Caco-2 (cell line): ENCODE measurements at regions of chr1 and their contacts with region 1.

Region 1: DNA sequence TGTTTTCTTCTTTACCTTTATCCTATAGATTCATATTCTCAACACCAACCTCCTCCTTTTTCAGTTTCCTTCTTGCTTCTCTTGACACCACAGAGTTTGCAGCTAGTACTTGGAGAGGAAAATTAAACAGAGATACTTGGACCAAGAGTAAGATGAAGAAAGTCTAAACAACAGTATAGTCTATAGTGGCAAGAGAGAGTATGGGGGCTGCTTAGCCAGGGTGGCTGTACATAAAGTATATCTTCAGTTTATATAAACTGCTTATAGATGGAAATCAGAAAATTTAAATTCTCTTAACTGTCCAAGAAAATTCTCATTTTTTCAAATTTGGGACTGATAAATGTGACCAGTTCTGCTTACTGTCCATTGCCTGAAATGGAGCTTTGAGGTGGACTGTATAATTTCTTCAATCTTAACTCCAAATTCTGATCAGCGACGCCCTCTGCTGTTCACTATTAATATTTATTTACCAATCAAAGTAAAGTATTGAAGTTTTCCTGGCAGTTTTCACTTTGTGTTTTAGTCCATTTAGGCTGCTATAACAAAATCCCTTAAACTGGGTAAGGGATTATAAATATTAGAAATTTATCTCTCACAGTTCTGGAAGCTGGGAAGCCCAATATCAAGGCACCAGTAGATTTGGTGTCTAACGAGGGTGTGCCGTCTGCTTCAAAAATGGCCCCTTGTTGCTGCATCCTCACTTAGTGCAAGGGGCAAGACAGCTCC is 14.8 kb upstream of the METTL18 start:
- DNase-seq: peak in 1 of 2 experiments; percentile 51
- H3K4me3 ChIP-seq: no peak overlapping the region
- H3K4me3 Mint-ChIP-seq: no peak overlapping the region
- H3K27ac Mint-ChIP-seq: no peak overlapping the region
- H3K4me1 ChIP-seq: no peaks in the 10 kb centered on the region
- H3K4me1 Mint-ChIP-seq: no peaks in the 10 kb centered on the region
- H3K27me3 ChIP-seq: no peaks in the 10 kb centered on the region
- H3K27me3 Mint-ChIP-seq: no peaks in the 10 kb centered on the region
- CTCF ChIP-seq: peak; percentile 34 to 46

Region 2: GRCh38 chr1:169601093-169601881 is 208.2 kb before region 1 on chr1:
- CTCF ChIA-PET with region 1: interaction called, 9 read pairs
- POLR2A ChIA-PET with region 1: no interaction called
- intact Hi-C with region 1: loop called (anchors 1 kb)
- DNase-seq: peak in 1 of 2 experiments; percentile 34
- H3K4me3 ChIP-seq: no peak overlapping the region
- H3K4me3 Mint-ChIP-seq: no peak overlapping the region
- H3K27ac Mint-ChIP-seq: no peak overlapping the region
- H3K4me1 ChIP-seq: no peaks in the 10 kb centered on the region
- H3K4me1 Mint-ChIP-seq: no peaks in the 10 kb centered on the region
- H3K27me3 ChIP-seq: no peaks in the 10 kb centered on the region; the same call in 1 of the 2 replicates
- H3K27me3 Mint-ChIP-seq: peaks cover 6% of the 10 kb centered on the region
- CTCF ChIP-seq: peak; percentile 35 to 41

Region 3: GRCh38 chr1:169648709-169649108 is 160.8 kb before region 1 on chr1:
- CTCF ChIA-PET with region 1: no interaction called
- POLR2A ChIA-PET with region 1: no interaction called
- intact Hi-C with region 1: no loop called
- DNase-seq: no peak
- H3K4me3 ChIP-seq: no peak overlapping the region
- H3K4me3 Mint-ChIP-seq: no peak overlapping the region
- H3K27ac Mint-ChIP-seq: no peak overlapping the region
- H3K4me1 ChIP-seq: no peaks in the 10 kb centered on the region
- H3K4me1 Mint-ChIP-seq: no peaks in the 10 kb centered on the region
- H3K27me3 ChIP-seq: no peaks in the 10 kb centered on the region
- H3K27me3 Mint-ChIP-seq: peaks cover 17% of the 10 kb centered on the region
- CTCF ChIP-seq: no peak

Region 4: GRCh38 chr1:169697755-169698154 is 111.8 kb before region 1 on chr1:
- CTCF ChIA-PET with region 1: no interaction called
- POLR2A ChIA-PET with region 1: no interaction called
- intact Hi-C with region 1: no loop called
- DNase-seq: no peak
- H3K4me3 ChIP-seq: no peak overlapping the region
- H3K4me3 Mint-ChIP-seq: no peak overlapping the region
- H3K27ac Mint-ChIP-seq: no peak overlapping the region
- H3K4me1 ChIP-seq: no peaks in the 10 kb centered on the region
- H3K4me1 Mint-ChIP-seq: no peaks in the 10 kb centered on the region
- H3K27me3 ChIP-seq: no peaks in the 10 kb centered on the region
- H3K27me3 Mint-ChIP-seq: peaks cover 3% of the 10 kb centered on the region
- CTCF ChIP-seq: no peak

Region 5: GRCh38 chr1:169753552-169753951 is 56.0 kb before region 1 on chr1:
- CTCF ChIA-PET with region 1: interaction called, 3 read pairs
- POLR2A ChIA-PET with region 1: no interaction called
- intact Hi-C with region 1: loop called (anchors 1 kb)
- DNase-seq: no peak
- H3K4me3 ChIP-seq: no peak overlapping the region
- H3K4me3 Mint-ChIP-seq: no peak overlapping the region
- H3K27ac Mint-ChIP-seq: no peak overlapping the region
- H3K4me1 ChIP-seq: no peaks in the 10 kb centered on the region
- H3K4me1 Mint-ChIP-seq: no peaks in the 10 kb centered on the region
- H3K27me3 ChIP-seq: no peaks in the 10 kb centered on the region
- H3K27me3 Mint-ChIP-seq: no peaks in the 10 kb centered on the region
- CTCF ChIP-seq: no peak

Region 6: GRCh38 chr1:169824153-169824552 is 14.6 kb after region 1 on chr1:
- CTCF ChIA-PET with region 1: no interaction called
- POLR2A ChIA-PET with region 1: no interaction called
- intact Hi-C with region 1: no loop called
- DNase-seq: no peak
- H3K4me3 ChIP-seq: no peak overlapping the region
- H3K4me3 Mint-ChIP-seq: no peak overlapping the region
- H3K27ac Mint-ChIP-seq: no peak overlapping the region
- H3K4me1 ChIP-seq: no peaks in the 10 kb centered on the region
- H3K4me1 Mint-ChIP-seq: no peaks in the 10 kb centered on the region
- H3K27me3 ChIP-seq: no peaks in the 10 kb centered on the region
- H3K27me3 Mint-ChIP-seq: no peaks in the 10 kb centered on the region
- CTCF ChIP-seq: no peak

Region 7: GRCh38 chr1:170074250-170075157 is 265.0 kb after region 1 on chr1 and contains the start of gene KIFAP3:
- CTCF ChIA-PET with region 1: no interaction called
- POLR2A ChIA-PET with region 1: no interaction called
- intact Hi-C with region 1: no loop called
- DNase-seq: peak; percentile 96 to 98
- H3K4me3 ChIP-seq: peak within 1 kb of the TSS; percentile 53
- H3K4me3 Mint-ChIP-seq: peak within 1 kb of the TSS; percentile 88
- H3K27ac Mint-ChIP-seq: peak within 1 kb of the TSS; percentile 85
- H3K4me1 ChIP-seq: no peaks in the 10 kb centered on the region
- H3K4me1 Mint-ChIP-seq: peaks cover 16% of the 10 kb centered on the region
- H3K27me3 ChIP-seq: no peaks in the 10 kb centered on the region
- H3K27me3 Mint-ChIP-seq: no peaks in the 10 kb centered on the region
- CTCF ChIP-seq: peak in 1 of 2 experiments; percentile 70
- total RNA-seq, gene KIFAP3: 10.9 and 11.0 TPM in 2 replicates